Activated naive CD4-positive, alpha-beta T cell treated with anti-CD3 and anti-CD28 coated beads for 36 hours (primary cell): ENCODE measurements at regions of chr18 and their contacts with region 1.

Region 1: GRCh38 chr18:864872-865273 is 39.8 kb upstream of the ADCYAP1 start:
- DNase-seq: peak; percentile 79
- H3K4me3 Mint-ChIP-seq: no peak overlapping the region
- H3K27ac Mint-ChIP-seq: no peak overlapping the region
- H3K4me1 Mint-ChIP-seq: peaks cover 2% of the 10 kb centered on the region
- H3K27me3 Mint-ChIP-seq: peaks cover 9% of the 10 kb centered on the region

Region 2: GRCh38 chr18:1663879-1664705 is 799.2 kb after region 1 on chr18:
- CTCF ChIA-PET with region 1: no interaction called
- intact Hi-C with region 1: loop called (anchors 1 kb)
- DNase-seq: peak; percentile 59
- H3K4me3 Mint-ChIP-seq: no peak overlapping the region
- H3K27ac Mint-ChIP-seq: no peak overlapping the region
- H3K4me1 Mint-ChIP-seq: no peaks in the 10 kb centered on the region
- H3K27me3 Mint-ChIP-seq: peaks cover 2% of the 10 kb centered on the region